ENCODE measurements at regions of chr5 and their contacts with region 1.

Region 1: GRCh38 chr5:146595088-146595487 is 79.1 kb upstream of the GPR151 start:
- DNase-seq: no peak
- H3K4me3 ChIP-seq: no peak overlapping the region
- H3K27ac ChIP-seq: no peak overlapping the region
- H3K4me1 ChIP-seq: no peaks in the 10 kb centered on the region
- H3K27me3 ChIP-seq: no peaks in the 10 kb centered on the region
- CTCF ChIP-seq: peak in 2 of 3 experiments; percentile 32 to 42; a peak in 3 of 4 replicates
- EP300 ChIP-seq: no peak
- POLR2A ChIP-seq: no peak
- RAD21 ChIP-seq: peak; percentile 43 to 65

Region 2: DNA sequence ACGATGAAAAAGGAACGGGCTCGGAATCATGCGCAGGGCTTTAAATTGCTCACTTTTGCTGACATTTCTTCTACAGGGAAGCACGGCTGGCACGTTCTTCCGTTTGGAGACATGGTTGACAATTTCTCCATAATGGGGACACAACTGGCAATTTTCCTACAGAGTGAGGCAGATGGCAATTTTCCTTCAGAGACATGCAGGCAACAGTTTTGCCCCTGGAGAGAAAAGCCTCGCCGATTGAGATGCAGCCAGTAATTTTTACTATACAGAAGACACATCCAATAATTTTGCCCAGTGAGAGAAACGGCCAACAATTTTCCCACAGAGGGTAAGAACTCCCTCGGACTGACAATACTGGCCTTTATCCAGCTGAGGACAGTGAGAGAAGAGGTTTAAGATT is 11.8 kb after region 1 on chr5:
- CTCF ChIA-PET with region 1: interaction called, 22 read pairs
- POLR2A ChIA-PET with region 1: interaction called, 3 read pairs
- DNase-seq: no peak
- H3K4me3 ChIP-seq: no peak overlapping the region
- H3K27ac ChIP-seq: no peak overlapping the region
- H3K4me1 ChIP-seq: no peaks in the 10 kb centered on the region
- H3K27me3 ChIP-seq: no peaks in the 10 kb centered on the region
- CTCF ChIP-seq: no peak
- EP300 ChIP-seq: no peak
- POLR2A ChIP-seq: no peak
- RAD21 ChIP-seq: no peak